ENCODE measurements at regions of chr10 and their contacts with region 1.

Region 1: GRCh38 chr10:74081192-74081803 is 69.3 kb downstream of the AP3M1 start:
- DNase-seq: no peak
- ATAC-seq: peak; percentile 51 to 62 (median 56)
- H3K4me3 ChIP-seq: no peak overlapping the region
- H3K27ac ChIP-seq: peak overlapping the region; percentile 52
- H3K4me1 ChIP-seq: peaks cover 32% of the 10 kb centered on the region
- H3K27me3 ChIP-seq: no peaks in the 10 kb centered on the region
- CTCF ChIP-seq: peak; percentile 74

Region 2: GRCh38 chr10:73956476-73957359 is 124.6 kb before region 1 on chr10:
- intact Hi-C with region 1: loop called in 1 of 2 experiments (anchors 5 kb)
- DNase-seq: no peak
- ATAC-seq: peak; percentile 75 to 85 (median 84)
- H3K4me3 ChIP-seq: peak overlapping the region; percentile 18
- H3K27ac ChIP-seq: peak overlapping the region; percentile 82
- H3K4me1 ChIP-seq: peaks cover 11% of the 10 kb centered on the region
- H3K27me3 ChIP-seq: no peaks in the 10 kb centered on the region
- CTCF ChIP-seq: no peak

Region 3: GRCh38 chr10:73997787-73998622 is 83.3 kb before region 1 on chr10 and contains the start of gene VCL:
- intact Hi-C with region 1: loop called in 1 of 2 experiments (anchors 5 kb)
- DNase-seq: peak; percentile 98 to 99
- ATAC-seq: peak; percentile 93 to 96 (median 96)
- H3K4me3 ChIP-seq: peak within 1 kb of the TSS; percentile 95
- H3K27ac ChIP-seq: peak within 1 kb of the TSS; percentile 97
- H3K4me1 ChIP-seq: peaks cover 35% of the 10 kb centered on the region
- H3K27me3 ChIP-seq: no peaks in the 10 kb centered on the region
- CTCF ChIP-seq: no peak
- total RNA-seq, gene VCL: 89.1 to 426 (median 179) TPM

Region 4: GRCh38 chr10:74035303-74035702 is 46.0 kb before region 1 on chr10:
- intact Hi-C with region 1: no loop called
- DNase-seq: no peak
- ATAC-seq: no peak
- H3K4me3 ChIP-seq: no peak overlapping the region
- H3K27ac ChIP-seq: peak overlapping the region; percentile 83
- H3K4me1 ChIP-seq: peaks cover 84% of the 10 kb centered on the region
- H3K27me3 ChIP-seq: no peaks in the 10 kb centered on the region
- CTCF ChIP-seq: peak; percentile 26

Region 5: DNA sequence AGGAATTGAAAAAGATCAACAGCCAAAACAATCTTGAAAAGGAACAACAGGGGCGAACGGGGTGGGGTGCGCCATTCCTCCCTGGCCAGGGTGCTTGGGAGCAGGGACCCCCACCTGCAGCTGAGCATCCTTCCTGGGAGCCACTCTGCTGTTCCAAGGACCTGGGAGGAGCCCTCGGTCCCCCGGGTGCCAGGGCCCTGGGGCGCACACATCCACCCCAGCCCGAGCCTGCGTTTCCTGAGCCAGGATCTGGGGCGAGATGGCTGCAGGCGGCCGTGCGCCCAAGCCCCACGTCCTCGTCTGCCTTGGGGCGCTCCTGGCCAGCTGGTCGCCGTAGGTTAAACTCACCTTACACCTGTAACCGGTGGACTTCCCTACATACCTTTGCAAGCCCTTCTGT is 58.7 kb after region 1 on chr10:
- intact Hi-C with region 1: loop called in 1 of 2 experiments (anchors 5 kb)
- DNase-seq: no peak
- ATAC-seq: peak in 3 of 4 donors; percentile 15 to 23 (median 19)
- H3K4me3 ChIP-seq: no peak overlapping the region
- H3K27ac ChIP-seq: no peak overlapping the region
- H3K4me1 ChIP-seq: peaks cover 2% of the 10 kb centered on the region
- H3K27me3 ChIP-seq: no peaks in the 10 kb centered on the region
- CTCF ChIP-seq: no peak

Region 6: DNA sequence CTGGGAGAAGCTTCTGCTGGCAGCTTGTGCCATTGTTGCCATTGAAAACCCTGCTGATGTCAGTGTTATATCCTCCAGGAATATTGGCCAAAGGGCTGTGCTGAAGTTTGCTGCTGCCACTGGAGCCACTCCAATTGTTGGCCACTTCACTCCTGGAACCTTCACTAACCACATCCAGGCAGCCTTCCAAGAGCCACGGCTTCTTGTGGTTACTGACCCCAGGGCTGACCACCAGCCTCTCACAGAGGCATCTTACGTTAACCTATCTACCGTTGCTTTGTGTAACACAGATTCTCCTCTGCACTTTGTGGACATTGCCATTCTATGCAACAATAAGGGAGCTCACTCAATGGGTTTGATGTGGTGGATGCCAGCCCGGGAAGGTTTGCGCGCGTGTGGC is 290.4 kb after region 1 on chr10:
- intact Hi-C with region 1: no loop called
- DNase-seq: no peak
- ATAC-seq: no peak
- H3K4me3 ChIP-seq: no peak overlapping the region
- H3K27ac ChIP-seq: no peak overlapping the region
- H3K4me1 ChIP-seq: no peaks in the 10 kb centered on the region
- H3K27me3 ChIP-seq: no peaks in the 10 kb centered on the region
- CTCF ChIP-seq: no peak